A549 (cell line): ENCODE measurements at regions of chr17 and their contacts with region 1.

Region 1: DNA sequence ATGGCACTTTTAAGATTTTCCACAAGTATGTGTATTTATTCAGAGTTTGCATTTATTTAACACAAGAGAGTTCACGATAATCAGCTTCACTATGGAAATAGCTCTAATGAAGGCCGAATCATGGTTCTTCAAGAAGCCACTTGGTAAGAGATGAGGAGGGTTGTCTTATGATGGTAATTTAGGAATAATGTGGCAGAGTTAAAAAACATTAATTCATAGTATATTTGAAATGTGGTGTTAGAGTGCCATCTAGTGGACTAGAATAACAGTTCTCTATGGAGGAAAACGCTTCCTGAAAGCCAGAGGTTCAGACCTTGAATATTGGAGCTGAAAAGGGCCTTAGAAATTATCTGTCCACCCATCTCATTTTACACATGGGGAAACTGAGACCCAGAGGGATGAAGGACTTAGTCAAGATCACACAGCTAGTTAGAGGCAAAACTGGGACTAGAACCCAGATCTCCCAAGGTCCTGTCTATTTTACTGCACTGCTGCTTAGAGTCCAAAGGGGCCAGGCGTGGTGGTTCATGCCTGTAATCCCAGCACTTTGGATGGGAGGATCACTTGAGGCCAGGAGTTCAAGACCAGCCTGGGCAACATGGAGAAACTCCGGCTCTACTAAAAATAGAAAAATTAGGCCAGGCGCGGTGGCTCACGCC is 33.8 kb upstream of the KPNB1 start:
- DNase-seq: peak; percentile 41 to 66
- ATAC-seq: peak; percentile 62 to 76
- H3K4me3 ChIP-seq: no peak overlapping the region
- H3K27ac ChIP-seq: peak overlapping the region in 1 of 2 experiments; percentile 36; a peak in 1 of 6 replicates
- H3K4me1 ChIP-seq: peaks cover 35% of the 10 kb centered on the region
- CTCF ChIP-seq: peak; percentile 96
- EP300 ChIP-seq: no peak
- POLR2A ChIP-seq: no peak
- RAD21 ChIP-seq: peak; percentile 86 to 91

Region 2: DNA sequence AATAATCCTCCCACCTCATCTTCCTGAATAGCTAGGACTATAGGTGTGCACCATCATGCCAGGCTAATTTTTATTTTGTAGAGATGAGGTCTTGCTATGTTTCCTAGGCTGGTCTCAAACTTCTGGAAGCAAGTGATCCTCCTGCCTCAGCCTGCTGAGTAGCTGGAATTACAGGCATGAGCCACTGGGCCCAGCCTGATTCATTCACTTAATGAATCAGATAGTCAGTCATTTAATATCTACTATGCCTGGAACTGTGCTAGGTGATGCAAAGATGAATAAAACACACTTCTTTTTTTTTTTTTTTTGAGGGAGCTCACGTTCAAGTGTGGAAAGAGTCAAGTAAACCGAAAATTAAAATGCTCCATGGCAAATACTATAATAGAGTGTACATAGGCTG is 252.7 kb before region 1 on chr17:
- CTCF ChIA-PET with region 1: interaction called, 19 read pairs
- POLR2A ChIA-PET with region 1: no interaction called
- DNase-seq: no peak
- ATAC-seq: no peak
- H3K4me3 ChIP-seq: no peak overlapping the region
- H3K27ac ChIP-seq: no peak overlapping the region
- H3K4me1 ChIP-seq: no peaks in the 10 kb centered on the region
- CTCF ChIP-seq: no peak
- EP300 ChIP-seq: no peak
- POLR2A ChIP-seq: no peak
- RAD21 ChIP-seq: no peak

Region 3: GRCh38 chr17:47427985-47428384 is 187.9 kb before region 1 on chr17:
- CTCF ChIA-PET with region 1: no interaction called
- POLR2A ChIA-PET with region 1: no interaction called
- DNase-seq: peak in 1 of 2 experiments; percentile 21
- ATAC-seq: no peak
- H3K4me3 ChIP-seq: no peak overlapping the region
- H3K27ac ChIP-seq: no peak overlapping the region
- H3K4me1 ChIP-seq: peaks cover 15% of the 10 kb centered on the region
- CTCF ChIP-seq: no peak
- EP300 ChIP-seq: no peak
- POLR2A ChIP-seq: no peak
- RAD21 ChIP-seq: no peak

Region 4: DNA sequence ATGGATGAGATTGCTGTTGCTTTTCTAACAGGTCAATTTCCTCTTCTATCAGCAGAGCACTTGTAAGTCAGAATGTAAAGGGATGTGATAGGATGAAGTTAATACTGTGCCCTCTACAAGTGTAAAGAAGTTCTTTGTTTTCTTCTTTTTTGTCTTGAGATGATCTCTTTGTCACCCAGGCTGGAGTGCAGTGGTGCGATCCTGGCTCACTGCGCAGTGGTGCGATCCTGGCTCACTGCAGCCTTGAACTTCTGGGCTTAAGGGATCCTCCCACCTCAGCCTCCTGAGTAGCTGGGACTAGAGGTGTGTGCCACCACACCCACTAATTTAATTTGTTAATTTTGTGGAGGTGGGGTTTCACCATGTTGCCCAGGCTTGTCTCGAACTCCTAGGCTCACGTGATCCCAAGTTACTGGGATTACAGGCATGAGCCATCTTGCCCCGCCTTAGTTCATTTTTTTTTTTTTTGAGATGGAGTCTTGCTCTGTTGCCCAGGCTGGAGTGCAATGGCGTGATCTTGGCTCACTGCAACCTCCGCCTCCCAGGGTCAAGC is 12.2 kb after region 1 on chr17:
- CTCF ChIA-PET with region 1: interaction called, 64 read pairs
- POLR2A ChIA-PET with region 1: no interaction called
- DNase-seq: no peak
- ATAC-seq: no peak
- H3K4me3 ChIP-seq: no peak overlapping the region
- H3K27ac ChIP-seq: no peak overlapping the region
- H3K4me1 ChIP-seq: no peaks in the 10 kb centered on the region; the same call in 2 of the 3 replicates
- CTCF ChIP-seq: no peak
- EP300 ChIP-seq: no peak
- POLR2A ChIP-seq: no peak
- RAD21 ChIP-seq: no peak

Region 5: GRCh38 chr17:47644324-47644723 is 28.4 kb after region 1 on chr17:
- CTCF ChIA-PET with region 1: interaction called, 19 read pairs
- POLR2A ChIA-PET with region 1: interaction called, 18 read pairs
- DNase-seq: no peak
- ATAC-seq: no peak
- H3K4me3 ChIP-seq: no peak overlapping the region
- H3K27ac ChIP-seq: no peak overlapping the region
- H3K4me1 ChIP-seq: peaks cover 6% of the 10 kb centered on the region
- CTCF ChIP-seq: no peak
- EP300 ChIP-seq: no peak
- POLR2A ChIP-seq: no peak
- RAD21 ChIP-seq: no peak

Region 6: GRCh38 chr17:47663912-47664625 is 48.2 kb after region 1 on chr17:
- CTCF ChIA-PET with region 1: interaction called, 12 read pairs
- POLR2A ChIA-PET with region 1: no interaction called
- DNase-seq: peak; percentile 75 to 76
- ATAC-seq: peak; percentile 88 to 95
- H3K4me3 ChIP-seq: no peak overlapping the region
- H3K27ac ChIP-seq: no peak overlapping the region
- H3K4me1 ChIP-seq: peaks cover 9% of the 10 kb centered on the region; the same call in 2 of the 3 replicates
- CTCF ChIP-seq: peak; percentile 88
- EP300 ChIP-seq: no peak
- POLR2A ChIP-seq: no peak
- RAD21 ChIP-seq: peak; percentile 59 to 66; a peak in 3 of 5 replicates

Region 7: DNA sequence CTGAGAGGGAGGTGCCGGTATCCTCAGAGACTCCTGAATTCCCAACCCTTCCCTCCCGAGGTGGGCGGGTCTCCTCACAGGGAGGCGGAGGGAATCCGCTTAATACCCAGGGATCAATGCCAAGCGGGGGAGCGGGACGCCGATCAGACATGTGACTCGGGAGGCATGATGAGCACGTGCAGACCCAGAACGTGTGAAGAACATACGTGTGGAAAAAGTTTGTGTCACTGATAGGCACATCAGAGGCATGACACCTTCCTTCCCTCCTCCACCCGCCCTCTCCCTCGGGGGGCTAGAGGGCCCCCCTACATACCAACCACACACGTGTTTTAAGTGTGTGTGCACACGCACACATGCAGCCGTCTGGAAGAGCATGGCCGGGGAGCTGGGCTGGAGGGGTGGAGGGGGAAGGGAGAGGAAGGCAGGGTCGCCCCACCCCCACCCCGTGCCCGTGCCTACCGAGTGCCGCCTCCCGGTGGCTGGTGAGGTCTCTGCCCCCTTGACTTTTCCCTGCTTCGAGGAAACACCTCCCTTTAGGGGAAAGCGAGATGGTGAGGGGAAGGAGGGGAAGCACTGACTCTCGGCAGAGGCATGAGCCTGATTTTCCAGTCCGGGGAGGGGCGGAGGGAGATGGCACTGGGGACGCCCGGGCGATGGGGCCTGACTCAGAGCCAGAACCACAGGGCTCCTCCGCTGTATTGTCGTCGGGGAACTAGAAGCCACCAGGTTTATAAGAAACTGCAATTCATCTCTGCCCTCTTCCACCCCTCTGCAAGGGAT is 105.0 kb after region 1 on chr17:
- CTCF ChIA-PET with region 1: no interaction called
- POLR2A ChIA-PET with region 1: no interaction called
- DNase-seq: no peak
- ATAC-seq: peak in 1 of 2 experiments; percentile 8; a peak in 2 of 6 replicates
- H3K4me3 ChIP-seq: no peak overlapping the region
- H3K27ac ChIP-seq: peak overlapping the region in 1 of 2 experiments; percentile 29; a peak in 2 of 6 replicates
- H3K4me1 ChIP-seq: peaks cover 13% of the 10 kb centered on the region
- CTCF ChIP-seq: no peak
- EP300 ChIP-seq: no peak
- POLR2A ChIP-seq: no peak
- RAD21 ChIP-seq: no peak